ENCODE measurements at regions of chr13 and their contacts with region 1.

Region 1: DNA sequence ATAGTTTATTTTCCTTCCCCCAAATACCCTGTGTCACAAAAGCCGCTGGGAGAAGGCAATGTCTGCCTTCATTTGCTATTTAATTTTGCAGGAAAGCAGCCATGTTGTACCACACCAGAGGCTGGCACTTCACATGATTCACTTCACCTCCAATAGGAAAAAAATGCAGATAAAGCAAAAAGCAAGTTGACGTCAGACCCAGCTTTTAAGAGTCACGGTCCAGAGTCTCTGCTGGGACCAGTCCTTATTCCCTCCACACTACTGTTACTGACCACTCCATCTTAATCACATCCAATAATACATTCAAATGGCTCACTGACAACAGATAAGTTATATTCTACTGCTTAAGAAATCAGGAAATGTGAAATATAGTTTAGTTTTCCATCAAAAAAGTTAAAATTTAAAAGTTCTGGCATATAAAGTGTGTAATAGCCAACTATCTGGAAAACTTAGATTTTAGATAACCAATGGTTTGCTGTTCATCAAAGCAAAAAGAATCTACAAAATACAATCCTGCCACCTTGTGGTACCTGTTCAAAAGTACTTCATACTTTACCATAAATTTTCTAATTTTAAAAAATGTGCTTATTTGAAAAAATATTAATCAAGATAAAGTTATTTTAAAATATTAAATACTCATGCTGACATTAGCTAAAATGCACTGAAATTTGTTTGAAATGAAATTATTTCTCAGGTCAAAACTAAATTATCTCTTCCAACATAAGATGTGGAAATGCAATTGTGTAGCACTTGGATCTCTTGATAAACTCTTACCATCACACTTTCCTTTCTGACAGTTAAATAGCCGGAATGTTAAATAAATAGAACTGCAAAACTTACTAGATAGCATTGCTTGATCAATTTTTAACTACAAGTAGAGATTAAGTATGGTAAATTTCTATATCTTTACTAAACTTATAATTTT is 97.3 kb downstream of the SERP2 start:
- DNase-seq: no peak
- H3K4me3 ChIP-seq: no peak overlapping the region
- H3K27ac ChIP-seq: peak overlapping the region; percentile 16
- H3K27me3 ChIP-seq: no peaks in the 10 kb centered on the region
- CTCF ChIP-seq: peak; percentile 7

Region 2: GRCh38 chr13:43874504-43875092 is 596.3 kb before region 1 on chr13:
- in situ Hi-C with region 1: no loop called
- DNase-seq: no peak
- H3K4me3 ChIP-seq: no peak overlapping the region
- H3K27ac ChIP-seq: no peak overlapping the region
- H3K27me3 ChIP-seq: no peaks in the 10 kb centered on the region
- CTCF ChIP-seq: peak; percentile 18

Region 3: DNA sequence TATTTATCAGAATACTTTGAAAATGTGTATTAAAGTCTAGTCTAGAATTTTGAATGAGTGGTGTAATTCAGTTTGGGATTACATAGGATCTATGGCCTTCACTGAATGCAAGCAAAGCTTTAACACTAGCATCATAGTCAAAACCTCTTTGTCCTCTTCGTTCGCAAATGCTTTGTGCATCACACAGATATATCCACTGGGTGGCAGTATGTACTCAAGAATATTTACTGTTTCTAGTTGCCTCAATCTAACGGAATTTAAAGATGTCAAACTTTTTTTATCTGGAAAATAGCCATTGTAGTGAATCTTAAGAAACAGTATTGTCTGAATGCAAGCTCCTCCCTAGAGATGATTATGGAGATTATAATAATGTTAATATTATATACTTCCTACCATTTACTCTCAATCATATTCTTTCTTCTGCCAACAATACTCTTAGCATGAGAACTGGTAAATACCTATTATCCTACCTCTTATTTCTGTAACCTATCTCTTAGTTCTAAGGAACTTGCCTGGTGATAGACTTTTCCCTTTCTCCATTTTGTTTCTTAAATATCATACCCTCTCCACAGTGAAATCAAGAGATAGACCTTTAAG is 565.4 kb before region 1 on chr13:
- in situ Hi-C with region 1: loop called (anchors 25 kb)
- DNase-seq: peak; percentile 60
- H3K4me3 ChIP-seq: no peak overlapping the region
- H3K27ac ChIP-seq: no peak overlapping the region
- H3K27me3 ChIP-seq: no peaks in the 10 kb centered on the region
- CTCF ChIP-seq: peak; percentile 52